Pancreas (tissue), 10 donors: ENCODE measurements at regions of chr12 and their contacts with region 1.

Region 1: DNA sequence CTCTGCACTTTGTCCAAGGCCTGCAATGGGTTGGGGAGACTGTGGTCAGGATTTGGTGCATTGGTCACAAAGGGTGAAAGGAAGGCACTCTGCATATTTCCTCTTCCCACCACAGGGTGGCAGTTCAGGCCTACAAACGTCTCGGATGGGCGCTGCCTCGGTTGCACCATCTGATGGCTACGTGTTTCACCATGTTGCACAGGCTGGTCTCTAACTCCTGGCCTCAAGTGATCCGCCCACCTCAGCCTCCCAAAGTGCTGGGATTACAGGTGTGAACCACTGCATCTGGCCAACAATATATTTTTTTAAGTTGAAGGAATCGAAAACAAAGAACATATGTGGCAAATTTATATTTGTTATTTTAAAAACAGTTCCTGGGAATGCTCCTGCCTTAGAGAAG is 35.1 kb downstream of the TMBIM6 start:
- DNase-seq: peak in 4 of 6 donors; percentile 32 to 64 (median 50)
- ATAC-seq: peak; percentile 72 to 93 (median 90)
- H3K4me3 ChIP-seq: no peak overlapping the region
- H3K27ac ChIP-seq: no peak overlapping the region
- H3K4me1 ChIP-seq: no peaks in the 10 kb centered on the region
- H3K27me3 ChIP-seq: no peaks in the 10 kb centered on the region
- CTCF ChIP-seq: peak; percentile 15 to 61 (median 50)

Region 2: DNA sequence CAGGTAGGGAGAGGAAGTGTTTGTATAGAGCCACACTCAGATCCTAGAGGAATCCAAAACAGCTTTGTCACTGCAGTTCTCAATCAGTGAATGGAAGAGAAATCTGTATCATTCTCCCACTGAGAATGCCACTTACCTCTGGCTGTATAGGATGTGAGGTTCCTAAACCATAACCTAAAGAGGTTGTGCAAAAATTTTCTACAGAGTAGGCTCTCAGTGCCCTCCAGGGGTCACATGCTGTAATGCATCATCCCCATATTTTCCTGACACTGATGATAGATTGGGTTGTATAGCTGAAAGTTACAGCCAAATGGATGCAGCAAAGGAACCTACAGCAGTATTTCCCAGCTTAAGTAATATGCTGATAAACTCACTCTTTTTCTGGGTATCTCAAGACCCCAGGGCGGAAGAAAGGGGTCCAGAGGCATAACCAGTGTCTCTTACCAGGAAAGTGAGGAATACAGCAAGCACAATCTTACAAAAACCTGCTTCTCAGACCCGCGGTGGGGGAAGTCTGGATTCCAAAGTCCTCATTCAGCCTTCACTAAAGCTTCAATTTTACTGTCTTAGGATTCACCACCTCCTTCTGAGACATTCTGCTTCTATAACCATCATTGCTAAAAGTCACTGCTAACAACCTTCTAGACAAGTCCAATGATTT is 62.7 kb after region 1 on chr12:
- intact Hi-C with region 1: loop called in 1 of 3 experiments (anchors 10 kb)
- DNase-seq: peak in 1 of 6 donors; percentile 30
- ATAC-seq: peak in 1 of 4 donors; percentile 20
- H3K4me3 ChIP-seq: no peak overlapping the region
- H3K27ac ChIP-seq: no peak overlapping the region
- H3K4me1 ChIP-seq: peaks cover 0 to 4% (median 0%) of the 10 kb centered on the region in 3 donors
- H3K27me3 ChIP-seq: no peaks in the 10 kb centered on the region
- CTCF ChIP-seq: peak; percentile 15 to 59 (median 42)